ENCODE measurements at regions of chr5 and their contacts with region 1.

Region 1: DNA sequence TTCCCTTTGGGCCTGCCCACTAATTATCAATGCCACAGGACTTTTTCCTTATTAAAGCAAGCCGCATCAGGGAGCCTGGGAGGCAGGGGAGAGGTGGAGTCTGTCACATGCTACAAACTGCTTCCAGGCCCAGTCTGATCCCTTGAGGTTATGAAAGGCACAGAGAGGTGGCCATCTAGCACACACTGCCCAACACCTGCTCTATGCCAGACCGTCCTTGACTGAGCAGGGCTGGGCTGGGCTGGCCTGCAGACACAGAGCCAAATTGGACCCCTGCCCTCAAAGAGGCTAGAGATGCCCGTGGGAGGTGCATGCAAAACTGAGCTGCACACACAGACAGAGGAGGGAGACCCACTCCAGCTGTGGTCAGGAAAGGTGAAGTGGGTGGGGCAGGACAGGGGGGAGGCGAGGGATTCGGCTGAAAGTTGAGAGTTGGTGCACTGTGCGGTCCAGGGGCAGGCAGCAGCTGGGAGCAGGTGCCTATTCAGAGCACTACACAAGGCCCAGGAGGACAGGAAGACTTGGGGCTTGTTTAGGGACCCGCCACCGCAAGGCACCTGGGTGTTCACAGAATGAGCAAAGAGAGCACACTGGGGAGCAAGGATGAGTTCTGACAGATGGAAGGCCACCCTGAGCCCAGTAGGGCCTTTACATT is 36.4 kb upstream of the TCF7 start:
- DNase-seq: no peak
- H3K4me3 ChIP-seq: no peak overlapping the region
- H3K27ac ChIP-seq: no peak overlapping the region
- H3K4me1 ChIP-seq: no peaks in the 10 kb centered on the region
- H3K27me3 ChIP-seq: no peaks in the 10 kb centered on the region
- CTCF ChIP-seq: no peak
- EP300 ChIP-seq: no peak
- POLR2A ChIP-seq: no peak
- RAD21 ChIP-seq: no peak

Region 2: GRCh38 chr5:133884569-133885311 is 193.3 kb before region 1 on chr5:
- CTCF ChIA-PET with region 1: no interaction called
- POLR2A ChIA-PET with region 1: no interaction called
- DNase-seq: no peak
- H3K4me3 ChIP-seq: no peak overlapping the region
- H3K27ac ChIP-seq: no peak overlapping the region
- H3K4me1 ChIP-seq: peaks cover 0 to 2% (median 0%) of the 10 kb centered on the region in 4 experiments; a peak in 1 of 7 replicates
- H3K27me3 ChIP-seq: no peaks in the 10 kb centered on the region
- CTCF ChIP-seq: no peak
- EP300 ChIP-seq: no peak
- POLR2A ChIP-seq: no peak
- RAD21 ChIP-seq: no peak

Region 3: DNA sequence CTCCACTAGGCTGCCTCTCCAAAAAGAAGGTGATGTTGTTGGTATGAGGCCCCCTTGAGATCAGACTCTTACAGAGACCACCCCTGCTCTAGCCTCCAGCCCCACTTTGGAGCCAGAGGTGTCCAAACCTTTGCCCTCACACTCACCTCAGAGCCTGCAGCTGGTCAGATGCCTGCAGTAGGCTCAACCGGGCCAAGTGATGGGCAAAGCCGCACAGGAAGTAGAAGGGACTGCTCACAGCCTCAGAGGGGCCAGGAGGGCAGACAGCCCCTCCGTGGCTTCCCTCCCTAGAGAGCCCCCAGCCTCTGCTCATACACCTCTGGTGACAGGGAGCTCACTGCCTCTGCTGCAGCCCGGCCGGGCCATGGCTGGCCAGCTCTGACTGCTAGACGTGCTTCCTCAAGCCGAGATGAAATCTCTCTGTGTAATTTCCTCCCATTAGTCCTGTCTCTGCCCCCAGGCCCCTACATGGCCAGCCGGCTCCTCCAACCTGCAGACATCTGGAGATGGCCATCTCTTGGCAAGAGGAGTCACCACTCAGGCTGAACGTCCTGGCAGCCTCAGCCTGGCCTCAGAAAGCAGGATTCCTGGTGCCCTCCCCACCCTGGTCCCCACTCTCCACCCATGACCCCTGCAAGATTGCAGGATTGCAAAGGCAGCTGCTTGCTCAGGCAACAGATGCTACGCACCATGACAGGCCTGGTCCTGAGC is 29.1 kb after region 1 on chr5:
- CTCF ChIA-PET with region 1: interaction called, 10 read pairs
- POLR2A ChIA-PET with region 1: interaction called, 4 read pairs
- DNase-seq: no peak
- H3K4me3 ChIP-seq: no peak overlapping the region
- H3K27ac ChIP-seq: no peak overlapping the region
- H3K4me1 ChIP-seq: peaks cover 0 to 3% (median under 1%) of the 10 kb centered on the region in 4 experiments; a peak in 3 of 7 replicates
- H3K27me3 ChIP-seq: peaks cover 4 to 22% (median 15%) of the 10 kb centered on the region in 4 experiments
- CTCF ChIP-seq: no peak
- EP300 ChIP-seq: no peak
- POLR2A ChIP-seq: no peak
- RAD21 ChIP-seq: no peak